Upper lobe of right lung (tissue), 1 donor: ENCODE measurements at regions of chr4 and their contacts with region 1.

Region 1: GRCh38 chr4:147019061-147019460 is 73.4 kb upstream of the TTC29 start:
- DNase-seq: peak; percentile 71
- ATAC-seq: peak; percentile 93
- H3K4me3 ChIP-seq: no peak overlapping the region
- H3K27ac ChIP-seq: no peak overlapping the region
- H3K4me1 ChIP-seq: no peaks in the 10 kb centered on the region
- H3K27me3 ChIP-seq: peaks cover 5% of the 10 kb centered on the region
- CTCF ChIP-seq: peak; percentile 70

Region 2: DNA sequence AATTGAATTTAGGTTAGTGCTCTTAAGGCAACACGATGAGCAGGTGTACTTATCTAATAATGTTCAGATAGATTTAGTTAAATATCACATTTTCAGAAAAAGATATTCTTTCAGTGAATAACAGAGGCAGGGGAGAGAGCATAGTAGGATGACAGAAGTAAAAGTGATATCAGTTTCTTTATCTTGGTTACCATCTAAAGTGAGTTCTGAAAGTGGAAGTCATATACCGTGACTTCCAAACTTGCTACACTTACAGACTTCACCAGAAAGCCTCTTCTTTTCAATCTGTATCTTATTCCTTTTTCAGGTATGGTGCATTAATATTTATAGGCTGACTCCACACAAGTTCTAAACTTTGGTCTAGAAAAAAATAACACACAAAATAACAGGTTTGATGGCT is 255.5 kb before region 1 on chr4:
- intact Hi-C with region 1: no loop called
- DNase-seq: no peak
- ATAC-seq: no peak
- H3K4me3 ChIP-seq: no peak overlapping the region
- H3K27ac ChIP-seq: no peak overlapping the region
- H3K4me1 ChIP-seq: no peaks in the 10 kb centered on the region
- H3K27me3 ChIP-seq: no peaks in the 10 kb centered on the region
- CTCF ChIP-seq: no peak

Region 3: DNA sequence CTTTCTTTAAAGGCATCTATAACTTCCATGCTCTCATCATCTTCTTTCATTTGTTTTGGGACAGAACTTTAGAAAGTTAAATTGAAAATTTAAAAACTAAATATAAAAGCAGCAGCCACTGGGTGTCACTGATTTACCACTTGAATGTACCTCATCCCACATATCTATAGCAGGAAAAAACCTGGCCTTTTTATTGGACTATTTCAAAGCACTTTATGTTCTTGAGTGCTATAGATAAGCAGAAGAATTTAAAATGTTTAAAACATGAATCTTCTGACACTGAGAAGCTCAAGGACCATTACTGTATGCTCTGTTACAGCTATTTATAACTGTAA is 91.9 kb after region 1 on chr4:
- intact Hi-C with region 1: no loop called
- DNase-seq: no peak
- ATAC-seq: no peak
- H3K4me3 ChIP-seq: no peak overlapping the region
- H3K27ac ChIP-seq: no peak overlapping the region
- H3K4me1 ChIP-seq: no peaks in the 10 kb centered on the region
- H3K27me3 ChIP-seq: no peaks in the 10 kb centered on the region
- CTCF ChIP-seq: no peak

Region 4: DNA sequence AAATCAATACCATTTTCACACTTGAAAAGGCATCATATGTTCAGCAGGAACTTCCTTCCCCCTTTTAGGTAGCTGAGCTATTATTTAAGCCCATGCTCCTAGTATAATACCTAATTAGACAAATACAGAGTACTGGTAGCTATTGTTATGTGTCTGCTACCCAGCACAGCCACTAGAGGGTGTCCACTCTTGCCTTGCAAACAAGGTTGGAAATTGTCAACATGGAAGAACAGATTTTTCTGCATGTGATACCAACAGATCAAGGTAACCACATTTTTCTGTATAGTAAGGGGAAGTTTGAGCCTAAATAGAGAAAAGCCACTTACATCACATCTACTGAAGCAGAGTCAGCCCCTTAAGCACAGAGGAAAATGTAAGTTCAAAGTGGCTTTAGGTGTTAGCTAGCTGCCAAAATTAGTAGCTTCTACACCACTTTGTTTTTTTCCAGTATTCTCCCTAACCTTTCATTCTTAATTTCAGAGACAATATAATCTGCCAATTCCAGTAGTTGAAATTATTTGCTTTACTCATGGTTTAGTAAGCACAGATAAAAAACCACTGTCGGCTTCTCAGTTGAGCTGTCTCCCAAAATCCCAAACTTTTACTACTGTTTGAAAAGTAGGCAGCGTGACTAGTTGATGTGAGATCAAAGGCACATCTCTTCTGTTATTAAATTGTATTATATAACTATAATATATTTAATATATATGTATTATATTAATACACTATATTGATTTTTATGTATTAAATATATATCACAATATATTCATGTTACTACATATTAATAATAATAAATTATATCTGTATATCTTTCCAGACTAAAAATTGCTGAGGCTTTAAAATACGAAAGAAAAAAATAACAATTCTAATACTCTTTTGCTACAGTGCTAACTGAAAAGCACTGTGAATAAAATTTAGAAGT is 500.0 kb after region 1 on chr4:
- intact Hi-C with region 1: no loop called
- DNase-seq: no peak
- ATAC-seq: peak; percentile 88
- H3K4me3 ChIP-seq: no peak overlapping the region
- H3K27ac ChIP-seq: no peak overlapping the region
- H3K4me1 ChIP-seq: no peaks in the 10 kb centered on the region
- H3K27me3 ChIP-seq: no peaks in the 10 kb centered on the region
- CTCF ChIP-seq: peak; percentile 82

Region 5: GRCh38 chr4:147586637-147587036 is 567.6 kb after region 1 on chr4:
- intact Hi-C with region 1: loop called (anchors 10 kb)
- DNase-seq: no peak
- ATAC-seq: no peak
- H3K4me3 ChIP-seq: no peak overlapping the region
- H3K27ac ChIP-seq: no peak overlapping the region
- H3K4me1 ChIP-seq: peaks cover 6% of the 10 kb centered on the region
- H3K27me3 ChIP-seq: no peaks in the 10 kb centered on the region
- CTCF ChIP-seq: no peak